Activated T-helper 1 cell treated with anti-CD3 and anti-CD28 coated beads, Interleukin-12 subunit alpha, Interleukin-12 subunit beta, Interleukin-2, Interleukin-4 antibody, amounts not matched to agents 30 ng/mL and 10 ng/mL and 1 ng/mL, durations not matched to agents 14 hours and 24 hours and 36 hours (primary cell): ENCODE measurements at regions of chr1 and their contacts with region 1.

Region 1: DNA sequence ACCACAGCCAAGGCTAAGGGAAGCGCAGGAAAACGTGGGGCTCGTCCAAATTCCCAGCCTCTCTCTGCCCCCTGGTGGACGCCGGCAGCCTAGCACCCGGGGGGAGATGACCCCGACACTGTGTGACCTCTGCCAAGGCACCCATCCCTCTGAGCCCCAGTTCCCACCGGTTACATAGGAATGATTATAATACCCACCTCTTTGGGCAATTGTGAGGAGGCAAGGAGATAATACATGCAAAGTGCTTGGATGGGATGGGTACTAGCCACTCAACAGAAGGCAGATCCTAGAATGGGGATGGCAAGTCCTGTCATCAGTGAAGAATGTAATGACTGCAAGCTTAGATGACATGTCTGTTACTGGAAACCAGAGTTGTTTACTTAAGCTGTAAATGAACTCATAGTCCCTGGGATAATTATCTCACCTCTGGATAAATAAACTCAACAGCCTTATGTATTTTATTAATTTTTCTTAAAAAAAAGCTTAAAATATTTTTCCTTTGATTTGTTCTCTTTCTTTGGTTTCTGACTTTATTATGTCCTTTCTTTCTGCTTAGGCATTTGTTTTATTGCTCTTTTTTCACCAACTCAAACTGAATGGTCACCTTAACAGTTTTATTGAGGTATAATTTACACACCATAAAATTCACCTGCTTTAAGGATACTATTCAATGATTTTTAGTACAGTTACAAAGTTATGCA is 11.3 kb upstream of the BMP8B start:
- DNase-seq: peak; percentile 41
- H3K4me3 Mint-ChIP-seq: peak overlapping the region; percentile 60
- H3K27ac Mint-ChIP-seq: peak overlapping the region; percentile 80
- H3K4me1 Mint-ChIP-seq: peaks cover 12% of the 10 kb centered on the region
- H3K27me3 Mint-ChIP-seq: peaks cover 4% of the 10 kb centered on the region

Region 2: DNA sequence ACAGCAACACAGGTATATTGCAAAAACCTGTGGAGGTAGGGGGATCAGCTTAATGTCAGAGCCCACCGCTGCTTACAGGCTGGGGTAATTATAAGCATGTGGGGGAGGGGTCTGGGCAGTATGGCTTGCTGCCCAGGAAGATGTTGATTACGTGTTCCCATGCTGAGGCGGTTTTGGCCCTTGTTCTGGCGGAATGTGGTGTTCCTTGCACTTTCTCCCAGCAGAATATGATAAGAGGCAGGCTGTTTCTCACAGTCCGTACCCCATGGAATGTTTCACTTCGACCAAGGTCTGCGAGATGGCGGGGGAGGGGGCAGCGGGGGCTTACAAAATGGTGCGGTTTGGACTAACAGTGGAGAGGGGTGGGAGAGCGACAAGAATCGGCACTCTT is 98.9 kb before region 1 on chr1:
- intact Hi-C with region 1: loop called (anchors 1 kb)
- DNase-seq: no peak
- H3K4me3 Mint-ChIP-seq: no peak overlapping the region
- H3K27ac Mint-ChIP-seq: no peak overlapping the region
- H3K4me1 Mint-ChIP-seq: no peaks in the 10 kb centered on the region
- H3K27me3 Mint-ChIP-seq: peaks cover 15% of the 10 kb centered on the region

Region 3: DNA sequence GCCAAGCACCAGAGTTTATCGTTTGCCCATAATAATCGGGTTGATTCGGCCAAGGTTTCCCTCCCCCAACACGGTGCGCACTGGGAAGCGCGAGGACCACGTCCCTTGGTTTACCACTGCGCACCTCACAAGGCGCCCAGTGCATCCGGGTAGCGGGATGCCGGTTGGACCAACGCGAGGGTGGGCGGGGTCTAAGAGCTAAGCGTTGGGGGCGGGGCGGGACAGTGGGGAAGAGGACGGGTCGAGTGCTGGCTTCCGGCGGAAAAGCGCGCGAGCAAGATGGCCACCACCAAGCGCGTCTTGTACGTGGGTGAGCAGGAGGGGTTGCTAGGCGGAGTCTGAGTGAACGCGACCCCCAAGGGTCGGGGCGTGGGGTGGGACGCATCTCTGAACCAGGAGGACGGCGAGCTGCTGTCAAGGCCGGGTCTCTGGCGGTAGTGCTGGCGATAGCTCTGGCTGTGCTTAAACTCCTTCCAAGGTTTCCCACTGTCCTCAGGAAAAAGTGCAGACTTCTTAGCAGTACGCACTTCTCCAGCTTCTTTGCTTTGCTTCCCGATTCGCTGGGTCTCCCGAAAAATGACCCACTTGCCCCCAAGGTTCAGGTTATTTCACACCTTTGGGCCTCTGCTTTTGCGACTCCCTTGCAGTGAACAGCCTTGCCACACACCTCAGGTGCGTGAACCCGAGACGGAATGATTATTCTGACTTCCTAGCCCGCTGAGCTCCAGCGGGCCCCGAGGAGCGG is 61.1 kb before region 1 on chr1 and contains the start of gene PPIE:
- intact Hi-C with region 1: loop called (anchors 2 kb)
- DNase-seq: peak; percentile 83
- H3K4me3 Mint-ChIP-seq: peak within 1 kb of the TSS; percentile 96
- H3K27ac Mint-ChIP-seq: peak within 1 kb of the TSS; percentile 93
- H3K4me1 Mint-ChIP-seq: peaks cover 67% of the 10 kb centered on the region
- H3K27me3 Mint-ChIP-seq: no peaks in the 10 kb centered on the region
- total RNA-seq, gene PPIE: 68.1 and 75.0 TPM in 2 replicates

Region 4: GRCh38 chr1:39788758-39789570 is 11.0 kb before region 1 on chr1 and contains the start of gene BMP8B:
- intact Hi-C with region 1: loop called (anchors 1 kb)
- DNase-seq: peak; percentile 19
- H3K4me3 Mint-ChIP-seq: peak within 1 kb of the TSS; percentile 82
- H3K27ac Mint-ChIP-seq: peak within 1 kb of the TSS; percentile 34
- H3K4me1 Mint-ChIP-seq: peaks cover 13% of the 10 kb centered on the region
- H3K27me3 Mint-ChIP-seq: peaks cover 43% of the 10 kb centered on the region
- total RNA-seq, gene BMP8B: 0.31 and 0.42 TPM in 2 replicates